Activated naive CD4-positive, alpha-beta T cell treated with anti-CD3 and anti-CD28 coated beads for 36 hours (primary cell): ENCODE measurements at regions of chr19 and their contacts with region 1.

Region 1: DNA sequence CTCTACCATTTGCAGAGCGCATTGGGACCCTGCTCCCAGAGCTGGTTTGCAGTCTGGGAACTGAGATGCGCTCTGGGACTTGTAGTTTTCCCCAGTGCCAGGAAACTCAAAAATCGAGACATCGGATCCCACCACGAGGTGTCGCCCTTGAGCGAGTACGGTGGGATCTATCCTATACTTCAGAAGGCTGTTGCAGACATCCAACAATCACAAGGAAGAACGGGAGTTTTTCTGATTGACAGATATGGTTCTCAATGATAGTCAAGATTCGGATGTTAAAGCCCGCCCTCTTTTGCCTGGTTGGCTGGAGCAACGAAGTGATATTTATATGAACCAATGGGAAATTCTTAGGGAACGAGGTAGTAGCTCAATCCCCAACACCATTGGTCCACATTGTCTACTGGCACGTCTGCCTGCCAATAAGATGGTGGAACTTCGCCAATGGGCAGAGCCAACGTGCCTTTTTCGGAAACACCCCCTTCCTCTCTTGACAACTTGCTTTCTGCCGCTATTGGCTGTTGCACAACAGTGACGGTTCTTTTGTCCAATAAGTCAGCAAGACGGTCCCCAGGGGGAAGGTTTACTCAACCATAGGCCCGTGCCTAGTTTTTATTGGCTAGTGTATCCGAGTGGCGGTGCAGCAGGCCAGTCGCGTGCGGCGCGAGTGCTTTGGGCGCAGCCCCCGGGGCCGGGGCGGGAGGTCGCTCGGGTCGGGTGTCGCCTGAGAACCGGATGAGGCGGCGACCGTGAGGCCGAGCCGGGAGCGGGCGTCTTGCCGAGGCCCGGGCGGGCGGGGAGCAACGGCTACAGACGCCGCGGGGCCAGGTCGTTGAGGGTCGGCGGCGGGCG is at the start of gene DNM2:
- DNase-seq: peak; percentile 99
- H3K4me3 Mint-ChIP-seq: peak within 1 kb of the TSS; percentile 96
- H3K27ac Mint-ChIP-seq: peak within 1 kb of the TSS; percentile 84
- H3K4me1 Mint-ChIP-seq: peaks cover 31% of the 10 kb centered on the region
- H3K27me3 Mint-ChIP-seq: no peaks in the 10 kb centered on the region
- total RNA-seq, gene DNM2: 144 to 148 TPM

Region 2: GRCh38 chr19:10695401-10696398 is 21.9 kb before region 1 on chr19:
- CTCF ChIA-PET with region 1: interaction called, 7 read pairs
- intact Hi-C with region 1: loop called (anchors 1 kb)
- DNase-seq: peak; percentile 92
- H3K4me3 Mint-ChIP-seq: peak overlapping the region; percentile 68
- H3K27ac Mint-ChIP-seq: no peak overlapping the region
- H3K4me1 Mint-ChIP-seq: peaks cover 17% of the 10 kb centered on the region
- H3K27me3 Mint-ChIP-seq: peaks cover 8% of the 10 kb centered on the region

Region 3: GRCh38 chr19:10760273-10760944 is 42.8 kb after region 1 on chr19:
- CTCF ChIA-PET with region 1: interaction called, 19 read pairs
- intact Hi-C with region 1: loop called (anchors 1 kb)
- DNase-seq: peak; percentile 65
- H3K4me3 Mint-ChIP-seq: peak overlapping the region; percentile 71
- H3K27ac Mint-ChIP-seq: peak overlapping the region; percentile 96
- H3K4me1 Mint-ChIP-seq: peaks cover 88% of the 10 kb centered on the region
- H3K27me3 Mint-ChIP-seq: no peaks in the 10 kb centered on the region

Region 4: GRCh38 chr19:10812902-10813404 is 95.4 kb after region 1 on chr19:
- CTCF ChIA-PET with region 1: interaction called, 4 read pairs
- intact Hi-C with region 1: loop called (anchors 5 kb)
- DNase-seq: peak; percentile 55
- H3K4me3 Mint-ChIP-seq: no peak overlapping the region
- H3K27ac Mint-ChIP-seq: peak overlapping the region; percentile 86
- H3K4me1 Mint-ChIP-seq: peaks cover 20% of the 10 kb centered on the region
- H3K27me3 Mint-ChIP-seq: no peaks in the 10 kb centered on the region

Region 5: DNA sequence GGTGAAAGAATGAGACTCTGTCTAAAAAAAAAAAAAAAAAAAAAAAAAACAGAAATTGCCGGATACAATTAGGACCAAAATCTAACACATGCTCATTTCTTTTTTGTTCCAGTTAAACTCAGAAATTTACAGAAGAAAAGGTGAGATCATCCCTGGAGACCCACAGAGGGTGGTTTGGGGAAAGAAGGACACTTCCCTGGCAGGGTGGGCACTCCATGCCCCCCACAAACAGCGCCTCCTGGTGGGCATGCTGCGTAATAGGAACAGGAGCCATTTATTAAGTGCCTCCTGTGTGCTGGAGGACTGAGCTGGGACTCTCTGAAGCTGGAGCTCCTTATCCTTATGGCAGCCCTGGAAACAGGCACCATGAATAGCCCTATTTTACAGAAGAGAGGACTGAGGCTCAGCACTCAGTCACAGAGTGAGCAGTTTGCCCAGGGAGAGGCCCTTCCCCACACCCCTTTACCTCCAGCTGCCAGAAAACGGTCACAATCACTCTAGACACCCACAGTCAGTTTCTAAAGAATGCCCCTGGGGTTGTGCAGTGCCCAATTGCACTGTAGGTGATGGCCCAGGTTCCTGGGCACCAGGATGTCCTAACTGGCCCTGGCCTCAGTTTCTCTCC is 140.7 kb after region 1 on chr19:
- CTCF ChIA-PET with region 1: interaction called, 99 read pairs
- intact Hi-C with region 1: loop called (anchors 1 kb)
- DNase-seq: peak; percentile 47
- H3K4me3 Mint-ChIP-seq: no peak overlapping the region
- H3K27ac Mint-ChIP-seq: no peak overlapping the region
- H3K4me1 Mint-ChIP-seq: no peaks in the 10 kb centered on the region
- H3K27me3 Mint-ChIP-seq: no peaks in the 10 kb centered on the region

Region 6: GRCh38 chr19:10928525-10929401 is 211.2 kb after region 1 on chr19 and contains the starts of genes TIMM29 and YIPF2:
- CTCF ChIA-PET with region 1: no interaction called
- intact Hi-C with region 1: loop called (anchors 1 kb)
- DNase-seq: peak; percentile 98
- H3K4me3 Mint-ChIP-seq: peak within 1 kb of the TSS; percentile 94
- H3K27ac Mint-ChIP-seq: peak within 1 kb of the TSS; percentile 67
- H3K4me1 Mint-ChIP-seq: peaks cover 31% of the 10 kb centered on the region
- H3K27me3 Mint-ChIP-seq: no peaks in the 10 kb centered on the region
- total RNA-seq, gene TIMM29: 11.0 to 12.7 TPM
- total RNA-seq, gene YIPF2: 22.7 to 25.4 TPM